ENCODE measurements at regions of chr2 and their contacts with region 1.

Region 1: GRCh38 chr2:61426267-61426897 is 44.5 kb downstream of the USP34 start:
- DNase-seq: peak; percentile 60
- ATAC-seq: peak; percentile 39
- H3K4me3 ChIP-seq: no peak overlapping the region
- H3K27ac ChIP-seq: peak overlapping the region; percentile 86
- H3K4me1 ChIP-seq: peaks cover 37% of the 10 kb centered on the region
- H3K27me3 ChIP-seq: no peaks in the 10 kb centered on the region
- CTCF ChIP-seq: peak; percentile 70

Region 2: DNA sequence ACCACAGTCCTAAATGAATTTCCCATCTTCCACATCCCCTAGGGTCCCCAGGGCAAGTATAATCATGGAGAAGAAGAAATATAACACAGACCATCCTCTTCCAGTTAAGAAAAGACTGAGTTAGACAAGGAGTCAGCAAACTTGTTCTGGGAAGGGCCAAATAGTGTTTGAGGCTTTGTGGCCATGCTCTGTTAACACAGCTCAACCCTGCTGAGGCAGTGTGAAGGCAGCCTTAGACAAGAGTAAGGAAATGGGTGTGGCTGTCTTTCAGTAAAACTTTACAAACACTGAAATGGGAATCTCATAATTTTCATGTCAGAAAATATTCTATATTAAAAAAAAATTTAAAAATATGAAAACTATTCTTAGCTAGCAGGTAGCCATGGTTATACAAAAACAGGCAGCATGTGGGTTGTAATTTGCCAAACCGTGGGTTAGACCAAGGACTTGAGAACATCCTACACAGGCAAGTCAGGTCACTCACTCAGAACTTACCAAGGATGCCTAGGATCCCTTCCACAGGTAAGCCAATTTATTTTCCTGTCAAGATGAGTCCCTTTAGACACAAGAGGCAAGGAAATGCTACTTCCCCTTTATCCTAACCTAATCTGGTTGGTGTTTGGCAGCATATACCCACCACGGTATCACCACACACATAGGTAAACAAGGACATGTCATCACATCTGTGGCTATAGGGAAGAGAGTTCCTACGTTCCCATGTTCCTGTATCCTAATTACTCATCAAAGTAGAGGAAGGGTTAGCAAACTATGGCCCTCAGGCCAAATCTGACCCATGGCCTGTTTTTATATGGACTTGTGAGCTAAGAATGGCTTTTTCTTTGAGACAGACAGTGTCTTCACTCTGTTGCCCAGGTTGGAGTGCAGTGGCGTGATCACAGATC is 232.5 kb before region 1 on chr2:
- CTCF ChIA-PET with region 1: no interaction called
- POLR2A ChIA-PET with region 1: no interaction called
- intact Hi-C with region 1: no loop called
- DNase-seq: peak; percentile 92
- ATAC-seq: peak; percentile 81
- H3K4me3 ChIP-seq: no peak overlapping the region
- H3K27ac ChIP-seq: peak overlapping the region; percentile 77
- H3K4me1 ChIP-seq: peaks cover 28% of the 10 kb centered on the region
- H3K27me3 ChIP-seq: no peaks in the 10 kb centered on the region
- CTCF ChIP-seq: no peak

Region 3: GRCh38 chr2:61450144-61450543 is 23.8 kb after region 1 on chr2:
- CTCF ChIA-PET with region 1: no interaction called
- POLR2A ChIA-PET with region 1: interaction called, 13 read pairs
- intact Hi-C with region 1: no loop called
- DNase-seq: no peak
- ATAC-seq: no peak
- H3K4me3 ChIP-seq: no peak overlapping the region
- H3K27ac ChIP-seq: no peak overlapping the region
- H3K4me1 ChIP-seq: no peaks in the 10 kb centered on the region
- H3K27me3 ChIP-seq: no peaks in the 10 kb centered on the region
- CTCF ChIP-seq: no peak

Region 4: DNA sequence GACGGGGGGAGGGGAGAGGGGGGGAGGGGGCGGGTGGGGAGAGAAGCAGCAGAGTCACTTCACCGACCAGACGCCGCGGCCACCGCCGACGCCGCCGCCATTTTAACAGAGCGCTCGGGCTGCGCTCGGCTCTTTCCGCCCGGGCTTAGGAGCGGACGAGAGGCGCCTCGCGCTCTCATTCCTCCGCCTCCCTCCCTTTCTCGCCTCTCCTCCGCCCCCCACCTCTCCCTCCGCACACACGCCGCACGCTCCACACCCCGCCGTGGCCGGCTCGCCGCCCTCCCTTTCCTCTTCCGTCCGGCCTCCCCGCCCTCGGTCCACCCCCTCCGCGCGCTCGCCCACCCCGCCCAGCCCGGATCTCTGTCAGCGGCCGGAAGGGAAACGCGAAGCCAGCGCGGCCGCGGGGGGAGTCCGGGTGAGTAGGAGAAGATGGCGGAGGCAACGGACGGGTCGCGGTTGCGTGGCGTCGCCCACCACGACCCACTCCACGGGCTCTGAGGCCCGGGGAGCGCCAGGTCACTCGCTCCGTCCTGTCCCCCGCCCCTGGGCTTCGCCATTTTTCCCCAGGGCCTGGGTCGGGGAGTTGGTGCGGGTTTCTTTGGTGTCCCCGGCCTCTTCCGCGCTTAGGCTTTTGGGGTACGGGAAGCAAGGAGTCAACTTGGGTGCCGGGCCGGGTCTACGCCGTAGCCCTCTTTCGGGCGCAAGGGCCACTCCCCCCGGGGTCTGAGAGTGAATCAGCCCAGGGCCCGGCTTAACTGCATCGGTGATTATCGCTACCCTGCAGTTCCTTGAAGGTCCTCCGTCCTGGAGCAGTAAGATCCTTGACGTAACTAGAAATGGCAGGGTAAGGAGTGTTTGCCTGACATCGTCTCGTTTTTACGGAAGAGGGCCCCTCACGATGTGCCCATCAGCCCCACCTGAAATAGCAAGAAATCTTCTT is 44.9 kb after region 1 on chr2 and contains the start of gene USP34:
- CTCF ChIA-PET with region 1: no interaction called
- POLR2A ChIA-PET with region 1: no interaction called
- intact Hi-C with region 1: loop called (anchors 5 kb)
- DNase-seq: peak; percentile 90
- ATAC-seq: peak; percentile 81
- H3K4me3 ChIP-seq: peak within 1 kb of the TSS; percentile 82
- H3K27ac ChIP-seq: peak within 1 kb of the TSS; percentile 87
- H3K4me1 ChIP-seq: peaks cover 12% of the 10 kb centered on the region
- H3K27me3 ChIP-seq: no peaks in the 10 kb centered on the region
- CTCF ChIP-seq: no peak
- total RNA-seq, gene USP34: 67.1 and 74.5 TPM in 2 replicates

Region 5: DNA sequence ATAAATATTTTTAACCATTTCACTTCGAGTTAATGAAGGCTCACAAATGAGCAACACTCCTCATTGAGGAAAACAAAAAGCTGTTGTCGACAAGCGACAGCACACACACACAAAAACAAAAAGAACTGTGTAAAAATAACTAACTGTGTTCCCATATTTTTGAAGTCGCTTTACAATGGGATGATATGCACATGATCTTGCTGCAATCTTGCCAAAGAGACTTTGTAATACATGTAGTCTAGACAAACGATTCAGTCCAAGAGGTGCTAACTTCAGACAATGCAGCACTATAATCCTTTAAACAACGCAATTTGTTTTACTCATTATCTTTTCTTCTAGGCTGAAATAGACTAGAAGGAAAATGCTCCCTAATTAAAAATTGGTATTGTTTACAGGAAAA is 51.7 kb after region 1 on chr2:
- CTCF ChIA-PET with region 1: no interaction called
- POLR2A ChIA-PET with region 1: no interaction called
- intact Hi-C with region 1: loop called (anchors 5 kb)
- DNase-seq: no peak
- ATAC-seq: no peak
- H3K4me3 ChIP-seq: no peak overlapping the region
- H3K27ac ChIP-seq: no peak overlapping the region
- H3K4me1 ChIP-seq: no peaks in the 10 kb centered on the region
- H3K27me3 ChIP-seq: no peaks in the 10 kb centered on the region
- CTCF ChIP-seq: no peak

Region 6: GRCh38 chr2:61538200-61538919 is 112.0 kb after region 1 on chr2 and contains the start of gene XPO1:
- CTCF ChIA-PET with region 1: no interaction called
- POLR2A ChIA-PET with region 1: no interaction called
- intact Hi-C with region 1: no loop called
- DNase-seq: peak; percentile 99
- ATAC-seq: peak; percentile 82
- H3K4me3 ChIP-seq: peak within 1 kb of the TSS; percentile 94
- H3K27ac ChIP-seq: peak within 1 kb of the TSS; percentile 93
- H3K4me1 ChIP-seq: peaks cover 25% of the 10 kb centered on the region
- H3K27me3 ChIP-seq: no peaks in the 10 kb centered on the region
- CTCF ChIP-seq: no peak
- total RNA-seq, gene XPO1: 138 and 170 TPM in 2 replicates